Activated CD4-positive, alpha-beta memory T cell treated with anti-CD3 and anti-CD28 coated beads, Interleukin-2, amount 10 ng/mL, durations not matched to agents 7 days and 5 days (primary cell): ENCODE measurements at regions of chr17 and their contacts with region 1.

Region 1: DNA sequence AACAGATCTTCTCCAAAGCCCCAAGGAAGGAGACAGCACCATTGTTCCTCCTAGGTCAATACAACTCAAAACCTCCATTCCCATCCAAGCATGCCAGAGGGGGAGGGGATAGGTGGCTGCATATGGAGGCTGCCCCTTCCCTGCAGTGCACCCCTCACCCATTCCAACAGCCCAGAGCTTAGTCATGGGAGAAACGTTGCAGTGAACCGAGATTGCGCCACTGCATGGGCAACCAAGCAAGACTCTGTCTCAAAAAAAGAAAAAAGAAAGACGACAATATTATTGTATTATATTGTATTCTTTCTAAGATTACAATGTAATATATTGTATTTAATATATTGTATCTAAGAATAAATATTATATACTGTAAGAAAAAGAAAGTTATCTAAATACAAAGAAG is 36.4 kb upstream of the CD300E start:
- DNase-seq: no peak
- H3K4me3 Mint-ChIP-seq: no peak overlapping the region
- H3K27ac Mint-ChIP-seq: no peak overlapping the region
- H3K4me1 Mint-ChIP-seq: peaks cover 8% of the 10 kb centered on the region
- H3K27me3 Mint-ChIP-seq: peaks cover 64% of the 10 kb centered on the region

Region 2: DNA sequence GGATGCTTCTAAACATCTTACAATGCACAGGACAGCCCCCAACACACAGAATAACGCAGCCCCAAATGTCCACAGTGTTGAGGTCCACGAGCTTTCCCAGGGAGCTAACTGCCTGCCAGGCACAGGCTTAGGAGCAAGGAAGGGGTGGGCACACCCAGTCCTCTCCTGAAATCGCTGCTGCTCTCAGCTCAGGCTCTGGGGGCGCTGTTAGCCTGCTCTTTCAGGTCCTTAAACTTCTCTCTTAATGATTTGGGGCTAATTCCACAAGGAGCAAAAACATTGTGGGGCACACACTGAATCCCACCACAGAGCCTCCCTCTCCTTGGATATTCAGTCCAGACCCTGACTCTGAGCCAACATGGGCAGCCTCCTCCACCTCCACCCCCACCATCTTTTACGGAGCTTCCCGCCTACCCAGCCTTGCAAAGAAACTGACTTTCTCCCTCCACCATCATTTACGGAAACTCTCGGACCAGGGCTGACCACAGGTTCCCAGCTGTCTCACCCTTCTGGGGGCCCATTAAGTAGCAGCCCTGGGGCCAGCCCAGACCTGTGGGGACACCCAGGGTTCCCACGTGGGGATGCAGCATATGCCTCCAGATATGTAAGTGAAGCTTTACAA is 93.7 kb before region 1 on chr17:
- CTCF ChIA-PET with region 1: interaction called, 12 read pairs
- POLR2A ChIA-PET with region 1: no interaction called
- DNase-seq: peak; percentile 41
- H3K4me3 Mint-ChIP-seq: no peak overlapping the region
- H3K27ac Mint-ChIP-seq: no peak overlapping the region
- H3K4me1 Mint-ChIP-seq: peaks cover 16% of the 10 kb centered on the region
- H3K27me3 Mint-ChIP-seq: peaks cover 53% of the 10 kb centered on the region

Region 3: GRCh38 chr17:74619077-74619673 is 40.7 kb before region 1 on chr17:
- CTCF ChIA-PET with region 1: no interaction called
- POLR2A ChIA-PET with region 1: no interaction called
- DNase-seq: no peak
- H3K4me3 Mint-ChIP-seq: no peak overlapping the region
- H3K27ac Mint-ChIP-seq: no peak overlapping the region
- H3K4me1 Mint-ChIP-seq: no peaks in the 10 kb centered on the region
- H3K27me3 Mint-ChIP-seq: peaks cover 68% of the 10 kb centered on the region

Region 4: GRCh38 chr17:74677558-74678466 is 17.9 kb after region 1 on chr17:
- CTCF ChIA-PET with region 1: interaction called, 29 read pairs
- POLR2A ChIA-PET with region 1: no interaction called
- DNase-seq: no peak
- H3K4me3 Mint-ChIP-seq: no peak overlapping the region
- H3K27ac Mint-ChIP-seq: peak overlapping the region; percentile 34
- H3K4me1 Mint-ChIP-seq: peaks cover 19% of the 10 kb centered on the region
- H3K27me3 Mint-ChIP-seq: peaks cover 58% of the 10 kb centered on the region

Region 5: DNA sequence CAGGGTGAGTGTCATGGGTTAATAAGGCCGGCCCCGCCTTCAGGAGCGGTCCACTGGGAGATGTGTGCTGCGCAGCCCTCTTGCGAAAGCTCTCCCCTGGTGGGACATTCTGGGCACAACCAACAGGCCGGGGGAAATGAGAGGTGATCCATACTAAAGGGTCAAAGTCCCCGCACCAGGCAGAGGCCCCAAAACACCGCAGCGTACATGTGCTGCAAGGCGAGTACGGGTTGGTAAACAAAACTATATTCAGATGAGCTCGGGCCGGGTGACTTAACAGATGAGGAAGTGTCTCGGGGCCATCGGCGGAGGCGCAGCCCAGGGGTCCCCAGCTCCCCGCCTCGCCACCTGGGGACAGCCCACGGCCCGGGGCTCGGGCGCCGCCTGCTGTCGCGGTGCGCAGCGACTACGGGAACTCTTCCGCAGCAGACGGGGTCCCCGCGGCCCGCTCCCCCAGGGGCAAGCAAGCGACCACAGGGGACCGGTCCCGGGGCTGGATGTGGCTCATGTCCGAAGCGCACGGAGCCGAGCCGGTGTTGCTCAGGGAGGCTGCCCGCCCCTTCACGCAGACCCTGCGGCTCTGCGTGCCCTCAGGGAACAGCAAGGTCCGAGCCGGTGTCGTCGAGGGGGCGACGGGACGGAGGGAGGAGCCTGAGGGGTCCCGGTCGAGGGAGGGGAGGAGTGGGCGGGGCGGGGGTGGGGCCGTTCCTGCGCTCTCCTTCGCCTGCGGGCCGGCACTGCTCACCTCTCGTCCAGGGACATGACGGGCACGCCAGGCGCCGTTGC is 76.8 kb after region 1 on chr17 and contains the start of gene RAB37:
- CTCF ChIA-PET with region 1: interaction called, 255 read pairs
- POLR2A ChIA-PET with region 1: interaction called, 33 read pairs
- DNase-seq: peak; percentile 55
- H3K4me3 Mint-ChIP-seq: peak within 1 kb of the TSS; percentile 87
- H3K27ac Mint-ChIP-seq: peak within 1 kb of the TSS; percentile 89
- H3K4me1 Mint-ChIP-seq: peaks cover 53% of the 10 kb centered on the region
- H3K27me3 Mint-ChIP-seq: peaks cover 5% of the 10 kb centered on the region
- total RNA-seq, gene RAB37: 56.1 to 58.5 TPM

Region 6: GRCh38 chr17:74759243-74759801 is 99.4 kb after region 1 on chr17:
- CTCF ChIA-PET with region 1: interaction called, 52 read pairs
- POLR2A ChIA-PET with region 1: interaction called, 5 read pairs
- DNase-seq: peak; percentile 82
- H3K4me3 Mint-ChIP-seq: peak overlapping the region; percentile 61
- H3K27ac Mint-ChIP-seq: peak overlapping the region; percentile 79
- H3K4me1 Mint-ChIP-seq: peaks cover 76% of the 10 kb centered on the region
- H3K27me3 Mint-ChIP-seq: no peaks in the 10 kb centered on the region

Region 7: GRCh38 chr17:74864866-74865395 is 205.0 kb after region 1 on chr17:
- CTCF ChIA-PET with region 1: interaction called, 35 read pairs
- POLR2A ChIA-PET with region 1: no interaction called
- DNase-seq: peak; percentile 77
- H3K4me3 Mint-ChIP-seq: no peak overlapping the region
- H3K27ac Mint-ChIP-seq: no peak overlapping the region
- H3K4me1 Mint-ChIP-seq: peaks cover 26% of the 10 kb centered on the region
- H3K27me3 Mint-ChIP-seq: peaks cover 19% of the 10 kb centered on the region